H1 (cell line): ENCODE measurements at regions of chr5 and their contacts with region 1.

Region 1: DNA sequence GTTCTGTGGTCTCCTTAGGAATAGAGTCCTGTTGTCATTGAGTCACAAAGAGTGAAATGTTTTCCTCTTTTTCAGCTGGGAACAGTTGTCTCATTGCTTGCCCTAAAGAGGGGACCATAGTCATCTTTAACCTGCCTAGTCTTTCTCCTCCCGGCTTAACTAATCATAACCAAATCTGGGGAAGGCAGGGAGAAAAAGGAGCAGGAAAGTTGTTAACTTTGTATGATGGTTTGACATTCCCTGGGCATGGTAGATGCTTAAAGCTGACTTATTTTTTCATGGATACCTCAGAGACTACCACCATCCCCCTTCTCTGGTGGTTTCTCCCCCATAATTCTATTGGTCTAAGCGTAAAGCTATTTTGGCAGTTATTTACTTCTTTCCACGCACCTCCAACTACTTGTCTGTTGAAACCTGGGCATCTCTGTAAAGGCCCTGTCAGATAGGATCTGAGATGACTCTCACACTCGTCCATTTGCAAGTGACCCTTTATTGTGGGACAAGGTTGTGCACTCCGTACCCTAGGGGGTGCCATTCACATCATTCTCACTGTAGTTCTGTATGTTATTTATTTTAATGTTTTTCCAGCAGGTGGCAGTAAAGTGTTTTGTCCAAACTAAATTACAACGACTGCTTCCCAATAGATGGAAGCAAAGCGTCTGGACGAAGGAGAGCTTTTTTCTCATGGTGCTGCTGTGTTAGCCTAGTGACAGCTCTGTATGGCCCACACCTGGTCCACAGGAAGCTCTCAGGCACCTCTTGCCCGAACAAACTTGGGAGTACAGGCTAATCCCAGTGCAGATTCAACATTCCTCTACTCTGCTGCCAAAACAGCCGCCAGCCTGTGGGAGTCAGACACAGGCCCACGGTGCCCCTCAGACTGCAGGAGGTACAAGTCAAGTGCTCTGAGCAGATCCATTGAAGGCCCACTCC is 3.0 kb upstream of the FAM13B start:
- DNase-seq: peak; percentile 53 to 57
- H3K4me3 ChIP-seq: no peak overlapping the region; a peak in 1 of 8 replicates
- H3K27ac ChIP-seq: no peak overlapping the region
- H3K4me1 ChIP-seq: peaks cover 3 to 6% (median 4%) of the 10 kb centered on the region in 4 experiments; a peak in 3 of 7 replicates
- H3K27me3 ChIP-seq: no peaks in the 10 kb centered on the region
- CTCF ChIP-seq: peak; percentile 40 to 98 (median 83)
- EP300 ChIP-seq: no peak
- POLR2A ChIP-seq: no peak
- RAD21 ChIP-seq: peak; percentile 76 to 80

Region 2: GRCh38 chr5:137978659-137979058 is 57.2 kb before region 1 on chr5:
- CTCF ChIA-PET with region 1: no interaction called
- POLR2A ChIA-PET with region 1: no interaction called
- DNase-seq: no peak
- H3K4me3 ChIP-seq: no peak overlapping the region
- H3K27ac ChIP-seq: no peak overlapping the region
- H3K4me1 ChIP-seq: no peaks in the 10 kb centered on the region
- H3K27me3 ChIP-seq: no peaks in the 10 kb centered on the region
- CTCF ChIP-seq: no peak
- EP300 ChIP-seq: no peak
- POLR2A ChIP-seq: no peak
- RAD21 ChIP-seq: no peak

Region 3: DNA sequence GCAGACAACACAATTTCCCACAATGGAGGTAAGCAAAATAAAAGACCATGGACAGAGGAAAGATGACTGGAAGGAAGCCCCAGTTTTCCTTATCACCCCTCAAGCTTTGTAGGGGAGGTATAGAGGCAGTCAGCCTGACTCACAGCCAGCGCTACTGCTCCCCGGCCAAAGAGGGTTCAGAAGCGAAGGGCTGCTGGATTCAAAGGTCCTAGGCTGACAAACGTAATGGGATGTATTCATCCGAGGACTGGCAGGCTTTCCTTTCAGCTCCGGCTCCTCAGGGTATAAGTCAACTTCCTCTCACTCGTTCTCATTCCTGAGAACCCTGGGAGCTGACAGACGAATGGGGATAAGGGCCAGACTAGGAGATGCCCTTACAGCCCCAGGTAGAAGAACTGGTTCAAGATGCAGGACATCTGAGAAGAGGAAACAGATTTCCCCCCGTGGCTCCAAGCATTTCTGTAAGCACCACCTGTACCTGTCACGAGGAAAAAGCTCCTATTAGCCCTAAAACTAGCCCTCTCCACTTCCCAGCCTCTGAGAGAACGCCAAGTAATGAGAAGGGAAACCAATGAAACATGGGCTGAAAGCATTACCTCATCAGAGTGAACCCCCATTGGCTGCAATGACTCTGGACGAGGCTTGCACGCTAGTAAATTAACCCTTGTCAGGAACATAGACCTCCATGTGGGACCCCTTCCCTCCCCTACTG is 19.1 kb after region 1 on chr5:
- CTCF ChIA-PET with region 1: interaction called, 19 read pairs
- POLR2A ChIA-PET with region 1: interaction called, 4 read pairs
- DNase-seq: no peak
- H3K4me3 ChIP-seq: peak overlapping the region in 1 of 4 experiments; percentile 4; a peak in 1 of 8 replicates
- H3K27ac ChIP-seq: no peak overlapping the region
- H3K4me1 ChIP-seq: peaks cover 0 to 3% (median 0%) of the 10 kb centered on the region in 4 experiments; a peak in 1 of 7 replicates
- H3K27me3 ChIP-seq: no peaks in the 10 kb centered on the region
- CTCF ChIP-seq: no peak
- EP300 ChIP-seq: no peak
- POLR2A ChIP-seq: no peak
- RAD21 ChIP-seq: no peak

Region 4: GRCh38 chr5:138065102-138065501 is 29.2 kb after region 1 on chr5:
- CTCF ChIA-PET with region 1: interaction called, 179 read pairs
- POLR2A ChIA-PET with region 1: interaction called, 4 read pairs
- DNase-seq: peak; percentile 23 to 79
- H3K4me3 ChIP-seq: no peak overlapping the region
- H3K27ac ChIP-seq: no peak overlapping the region
- H3K4me1 ChIP-seq: no peaks in the 10 kb centered on the region
- H3K27me3 ChIP-seq: no peaks in the 10 kb centered on the region
- CTCF ChIP-seq: peak; percentile 76 to 85 (median 80)
- EP300 ChIP-seq: no peak
- POLR2A ChIP-seq: no peak
- RAD21 ChIP-seq: peak; percentile 53 to 55

Region 5: DNA sequence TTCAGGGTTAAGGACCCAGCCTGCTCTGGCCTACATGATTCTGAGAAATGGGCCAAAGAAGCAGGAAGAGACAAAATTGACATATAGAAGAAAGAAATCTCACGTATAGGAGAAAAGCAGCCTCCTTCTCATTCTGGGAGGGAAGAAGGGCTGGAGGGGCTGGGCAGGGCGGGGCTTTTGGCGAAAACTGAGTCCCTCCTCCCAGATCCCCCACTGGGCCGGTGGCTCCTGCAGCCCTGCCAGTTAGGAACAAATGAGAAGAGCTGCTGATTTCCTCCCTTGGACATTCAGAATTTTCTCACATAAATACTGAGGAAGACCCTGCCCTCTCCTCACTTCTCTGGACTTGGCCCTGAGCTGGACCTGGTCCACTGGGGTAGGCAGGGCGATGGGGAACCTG is 47.8 kb after region 1 on chr5 and contains the start of gene WNT8A:
- CTCF ChIA-PET with region 1: interaction called, 43 read pairs
- POLR2A ChIA-PET with region 1: no interaction called
- DNase-seq: no peak
- H3K4me3 ChIP-seq: no peak within 1 kb of the TSS
- H3K27ac ChIP-seq: no peak within 1 kb of the TSS
- H3K4me1 ChIP-seq: peaks cover 0 to 7% (median 2%) of the 10 kb centered on the region in 4 experiments; a peak in 4 of 7 replicates
- H3K27me3 ChIP-seq: peaks cover 0 to 6% (median 3%) of the 10 kb centered on the region in 4 experiments; a peak in 5 of 7 replicates
- CTCF ChIP-seq: no peak
- EP300 ChIP-seq: no peak
- POLR2A ChIP-seq: no peak
- RAD21 ChIP-seq: no peak
- total RNA-seq, gene WNT8A: 0.27 TPM in 1 of 2 replicates, not detected in the other

Region 6: GRCh38 chr5:138095100-138095907 is 59.4 kb after region 1 on chr5:
- CTCF ChIA-PET with region 1: interaction called, 10 read pairs
- POLR2A ChIA-PET with region 1: no interaction called
- DNase-seq: peak in 1 of 2 experiments; percentile 55
- H3K4me3 ChIP-seq: peak overlapping the region in 1 of 4 experiments; percentile 48; a peak in 3 of 8 replicates
- H3K27ac ChIP-seq: no peak overlapping the region
- H3K4me1 ChIP-seq: peaks cover 13 to 27% (median 26%) of the 10 kb centered on the region in 4 experiments
- H3K27me3 ChIP-seq: peaks cover 46 to 74% (median 65%) of the 10 kb centered on the region in 4 experiments
- CTCF ChIP-seq: no peak
- EP300 ChIP-seq: peak in 1 of 2 experiments; percentile 66; a peak in 1 of 3 replicates
- POLR2A ChIP-seq: no peak
- RAD21 ChIP-seq: no peak

Region 7: DNA sequence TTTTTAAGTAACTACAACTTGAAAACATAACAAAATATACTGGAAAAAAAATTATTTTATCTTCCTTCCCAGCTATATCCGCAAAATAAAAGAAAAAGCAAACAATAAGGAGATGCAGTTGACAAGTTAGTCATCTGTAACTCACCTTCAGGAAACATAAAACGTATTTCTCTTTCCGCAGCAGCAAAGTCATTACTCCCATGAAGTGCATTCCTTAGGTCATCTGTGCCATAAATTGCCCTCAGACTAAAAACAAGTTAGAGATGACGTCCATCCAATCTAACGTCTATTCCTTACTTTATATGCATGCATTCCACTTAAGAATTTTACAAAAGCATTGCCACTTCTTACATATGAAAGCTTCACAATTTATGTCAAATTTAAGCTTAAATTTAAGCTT is 92.5 kb after region 1 on chr5:
- CTCF ChIA-PET with region 1: interaction called, 39 read pairs
- POLR2A ChIA-PET with region 1: interaction called, 4 read pairs
- DNase-seq: no peak
- H3K4me3 ChIP-seq: no peak overlapping the region
- H3K27ac ChIP-seq: no peak overlapping the region
- H3K4me1 ChIP-seq: no peaks in the 10 kb centered on the region; a peak in 1 of 7 replicates
- H3K27me3 ChIP-seq: no peaks in the 10 kb centered on the region
- CTCF ChIP-seq: no peak
- EP300 ChIP-seq: no peak
- POLR2A ChIP-seq: no peak
- RAD21 ChIP-seq: no peak